Mammary epithelial cell (primary cell): ENCODE measurements at regions of chr16 and their contacts with region 1.

Region 1: GRCh38 chr16:21083729-21084268 is 66.8 kb downstream of the DNAH3 start:
- DNase-seq: peak; percentile 36
- H3K4me3 ChIP-seq: no peak overlapping the region
- H3K27ac ChIP-seq: no peak overlapping the region
- H3K4me1 ChIP-seq: peaks cover 3% of the 10 kb centered on the region
- H3K27me3 ChIP-seq: no peaks in the 10 kb centered on the region
- CTCF ChIP-seq: peak; percentile 65 to 84

Region 2: GRCh38 chr16:20799599-20799998 is 284.2 kb before region 1 on chr16:
- CTCF ChIA-PET with region 1: no interaction called
- dilution Hi-C with region 1: no loop called
- in situ Hi-C with region 1: no loop called
- intact Hi-C with region 1: loop called (anchors 2 kb)
- DNase-seq: no peak
- H3K4me3 ChIP-seq: no peak overlapping the region
- H3K27ac ChIP-seq: no peak overlapping the region
- H3K4me1 ChIP-seq: peaks cover 12% of the 10 kb centered on the region
- H3K27me3 ChIP-seq: no peaks in the 10 kb centered on the region
- CTCF ChIP-seq: peak; percentile 59 to 60

Region 3: DNA sequence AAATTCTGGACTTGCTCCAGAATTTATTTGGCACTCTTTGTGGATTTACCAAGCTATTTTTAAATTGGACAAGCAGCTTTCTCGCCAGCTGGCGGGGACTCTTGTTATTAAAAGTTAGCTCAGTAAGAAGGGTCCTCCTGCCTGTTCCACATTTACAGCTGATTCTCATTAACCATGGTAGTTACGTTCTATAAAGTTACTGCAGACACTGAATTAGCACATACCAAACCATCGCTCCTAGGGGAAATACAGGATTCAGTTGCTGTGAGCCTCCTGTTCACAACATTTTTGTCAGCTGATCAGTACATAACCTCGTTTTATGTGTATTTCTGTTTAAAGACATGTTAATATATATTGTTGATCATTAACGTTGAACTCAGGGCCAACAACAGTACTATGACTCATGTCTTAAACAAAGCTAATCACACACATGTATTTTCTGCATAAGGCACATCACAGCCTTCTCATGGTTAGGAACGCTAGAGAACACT is 78.9 kb after region 1 on chr16:
- CTCF ChIA-PET with region 1: no interaction called
- dilution Hi-C with region 1: no loop called
- in situ Hi-C with region 1: no loop called
- intact Hi-C with region 1: no loop called
- DNase-seq: no peak
- H3K4me3 ChIP-seq: no peak overlapping the region
- H3K27ac ChIP-seq: no peak overlapping the region
- H3K4me1 ChIP-seq: peaks cover 16% of the 10 kb centered on the region
- H3K27me3 ChIP-seq: no peaks in the 10 kb centered on the region
- CTCF ChIP-seq: no peak